Right lobe of liver (tissue), 6 donors: ENCODE measurements at regions of chr16 and their contacts with region 1.

Region 1: GRCh38 chr16:87324411-87325275 is 7.5 kb upstream of the C16orf95 start:
- DNase-seq: no peak
- ATAC-seq: peak; percentile 51 to 69 (median 59)
- H3K4me3 ChIP-seq: no peak overlapping the region
- H3K27ac ChIP-seq: no peak overlapping the region
- H3K4me1 ChIP-seq: no peaks in the 10 kb centered on the region
- H3K27me3 ChIP-seq: no peaks in the 10 kb centered on the region
- CTCF ChIP-seq: peak; percentile 56 to 79 (median 70)
- POLR2A ChIP-seq: no peak

Region 2: GRCh38 chr16:87375426-87376135 is 50.9 kb after region 1 on chr16:
- intact Hi-C with region 1: loop called (anchors 10 kb)
- DNase-seq: peak; percentile 30 to 62 (median 62)
- ATAC-seq: peak; percentile 60 to 80 (median 77)
- H3K4me3 ChIP-seq: no peak overlapping the region
- H3K27ac ChIP-seq: peak overlapping the region in 2 of 3 donors; percentile 60 to 66
- H3K4me1 ChIP-seq: peaks cover 0 to 42% (median 14%) of the 10 kb centered on the region in 4 donors
- H3K27me3 ChIP-seq: no peaks in the 10 kb centered on the region
- CTCF ChIP-seq: no peak
- POLR2A ChIP-seq: no peak